MCF 10A (cell line): ENCODE measurements at regions of chr4 and their contacts with region 1.

Region 1: GRCh38 chr4:27048429-27049238 is 188.0 kb downstream of the STIM2 start:
- DNase-seq: peak; percentile 35
- H3K4me3 Mint-ChIP-seq: peak overlapping the region; percentile 64
- H3K27ac Mint-ChIP-seq: no peak overlapping the region
- H3K4me1 Mint-ChIP-seq: peaks cover 5% of the 10 kb centered on the region
- H3K27me3 Mint-ChIP-seq: no peaks in the 10 kb centered on the region
- CTCF ChIP-seq: peak; percentile 75

Region 2: DNA sequence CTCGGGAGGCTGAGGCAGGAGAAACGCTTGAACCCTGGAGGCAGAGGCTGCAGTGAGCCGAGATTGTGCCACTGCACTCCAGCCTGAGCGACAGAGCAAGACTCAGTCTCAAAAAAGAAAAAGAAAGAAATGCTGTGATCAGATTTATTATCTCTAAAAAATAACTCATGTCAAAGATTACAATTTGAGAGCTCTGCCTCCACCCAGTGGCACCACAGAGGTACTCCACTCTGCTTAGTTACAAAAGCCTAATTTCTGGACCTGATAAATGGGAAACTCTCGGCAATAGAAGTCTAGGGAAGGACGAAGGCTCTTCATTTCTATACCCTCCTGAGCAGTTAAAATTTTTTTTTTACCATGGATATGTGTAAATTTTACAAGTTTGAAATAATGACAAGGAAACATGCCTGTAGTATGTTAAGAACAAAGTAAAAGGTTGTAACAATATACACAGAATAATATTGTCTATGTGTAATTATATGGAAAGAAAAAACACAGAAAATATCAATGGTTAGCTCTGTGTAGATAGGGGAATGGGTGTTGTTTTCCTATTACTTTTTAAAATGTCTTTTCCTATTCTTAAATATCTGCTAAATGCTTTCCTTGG is 38.2 kb before region 1 on chr4:
- CTCF ChIA-PET with region 1: no interaction called
- POLR2A ChIA-PET with region 1: no interaction called
- intact Hi-C with region 1: no loop called
- DNase-seq: peak; percentile 59
- H3K4me3 Mint-ChIP-seq: no peak overlapping the region
- H3K27ac Mint-ChIP-seq: peak overlapping the region; percentile 39
- H3K4me1 Mint-ChIP-seq: no peaks in the 10 kb centered on the region
- H3K27me3 Mint-ChIP-seq: no peaks in the 10 kb centered on the region
- CTCF ChIP-seq: peak; percentile 71

Region 3: DNA sequence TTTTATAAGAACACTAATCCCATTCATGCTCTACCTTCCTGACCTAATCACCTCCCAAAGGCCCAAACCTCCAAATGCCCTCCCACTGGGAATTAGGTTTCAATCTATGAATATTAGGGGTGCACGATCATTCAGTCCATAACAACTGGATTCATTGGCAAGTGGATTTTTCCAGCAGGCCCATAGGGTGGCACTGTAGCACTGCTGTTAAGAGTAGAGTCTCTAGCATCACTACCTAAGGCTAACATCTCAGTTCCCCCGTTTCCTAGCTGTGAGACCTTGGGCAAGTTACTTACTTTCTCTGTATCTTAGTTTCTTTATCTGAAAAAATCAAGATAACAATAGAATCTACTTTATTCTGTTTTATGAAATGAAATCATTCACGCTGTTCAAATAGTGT is 127.8 kb after region 1 on chr4:
- CTCF ChIA-PET with region 1: interaction called, 4 read pairs
- POLR2A ChIA-PET with region 1: no interaction called
- intact Hi-C with region 1: loop called (anchors 1 kb)
- DNase-seq: peak; percentile 60
- H3K4me3 Mint-ChIP-seq: no peak overlapping the region
- H3K27ac Mint-ChIP-seq: no peak overlapping the region
- H3K4me1 Mint-ChIP-seq: peaks cover 5% of the 10 kb centered on the region
- H3K27me3 Mint-ChIP-seq: no peaks in the 10 kb centered on the region
- CTCF ChIP-seq: peak; percentile 69

Region 4: DNA sequence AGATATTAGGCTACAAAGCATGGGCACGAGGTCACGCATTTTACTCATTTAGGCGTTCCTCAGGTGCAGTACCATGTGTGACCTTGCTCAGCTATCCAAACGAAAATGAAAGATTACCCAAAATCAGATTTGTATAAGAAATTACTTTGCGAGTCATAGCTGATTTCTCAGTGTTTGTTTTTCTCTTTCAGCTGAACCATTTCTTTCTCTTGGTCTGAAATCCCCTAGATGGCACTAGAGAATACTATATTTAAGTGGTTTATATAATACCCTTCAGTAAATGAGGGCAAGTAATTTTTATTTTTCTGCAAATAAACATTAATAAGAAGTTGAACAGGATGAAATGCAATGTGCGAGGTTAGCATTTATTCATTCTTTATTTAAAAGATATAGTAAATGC is 308.6 kb after region 1 on chr4:
- CTCF ChIA-PET with region 1: interaction called, 11 read pairs
- POLR2A ChIA-PET with region 1: no interaction called
- intact Hi-C with region 1: loop called (anchors 1 kb)
- DNase-seq: peak; percentile 30
- H3K4me3 Mint-ChIP-seq: no peak overlapping the region
- H3K27ac Mint-ChIP-seq: no peak overlapping the region
- H3K4me1 Mint-ChIP-seq: peaks cover 10% of the 10 kb centered on the region
- H3K27me3 Mint-ChIP-seq: no peaks in the 10 kb centered on the region
- CTCF ChIP-seq: peak; percentile 32

Region 5: GRCh38 chr4:27684610-27685011 is 636.0 kb after region 1 on chr4:
- CTCF ChIA-PET with region 1: interaction called, 7 read pairs
- POLR2A ChIA-PET with region 1: no interaction called
- intact Hi-C with region 1: loop called (anchors 10 kb)
- DNase-seq: peak; percentile 74
- H3K4me3 Mint-ChIP-seq: no peak overlapping the region
- H3K27ac Mint-ChIP-seq: no peak overlapping the region
- H3K4me1 Mint-ChIP-seq: no peaks in the 10 kb centered on the region
- H3K27me3 Mint-ChIP-seq: peaks cover 11% of the 10 kb centered on the region
- CTCF ChIP-seq: peak; percentile 88

Region 6: DNA sequence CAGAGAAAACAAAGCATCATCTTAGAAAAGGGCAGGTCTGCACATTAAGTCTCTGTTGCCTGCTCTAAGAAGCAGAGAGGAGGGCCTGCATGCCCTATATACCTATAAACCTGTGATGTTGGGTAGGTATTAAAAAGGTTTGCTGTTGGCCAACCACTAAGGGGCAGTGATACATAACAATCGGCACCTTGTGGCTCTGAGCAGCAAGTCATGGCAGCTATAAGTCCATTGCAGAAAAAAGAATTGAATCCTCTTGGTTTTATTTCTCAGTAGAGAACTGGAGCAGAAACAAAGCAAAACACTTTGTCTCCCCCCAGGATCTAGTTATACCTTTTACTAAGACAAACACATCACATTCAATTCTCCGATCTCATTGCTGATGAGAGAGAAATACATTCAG is 1176.4 kb after region 1 on chr4:
- CTCF ChIA-PET with region 1: interaction called, 5 read pairs
- POLR2A ChIA-PET with region 1: no interaction called
- intact Hi-C with region 1: loop called (anchors 5 kb)
- DNase-seq: peak; percentile 54
- H3K4me3 Mint-ChIP-seq: no peak overlapping the region
- H3K27ac Mint-ChIP-seq: no peak overlapping the region
- H3K4me1 Mint-ChIP-seq: no peaks in the 10 kb centered on the region
- H3K27me3 Mint-ChIP-seq: no peaks in the 10 kb centered on the region
- CTCF ChIP-seq: peak; percentile 49